AG04450 (cell line): ENCODE measurements at regions of chr18 and their contacts with region 1.

Region 1: DNA sequence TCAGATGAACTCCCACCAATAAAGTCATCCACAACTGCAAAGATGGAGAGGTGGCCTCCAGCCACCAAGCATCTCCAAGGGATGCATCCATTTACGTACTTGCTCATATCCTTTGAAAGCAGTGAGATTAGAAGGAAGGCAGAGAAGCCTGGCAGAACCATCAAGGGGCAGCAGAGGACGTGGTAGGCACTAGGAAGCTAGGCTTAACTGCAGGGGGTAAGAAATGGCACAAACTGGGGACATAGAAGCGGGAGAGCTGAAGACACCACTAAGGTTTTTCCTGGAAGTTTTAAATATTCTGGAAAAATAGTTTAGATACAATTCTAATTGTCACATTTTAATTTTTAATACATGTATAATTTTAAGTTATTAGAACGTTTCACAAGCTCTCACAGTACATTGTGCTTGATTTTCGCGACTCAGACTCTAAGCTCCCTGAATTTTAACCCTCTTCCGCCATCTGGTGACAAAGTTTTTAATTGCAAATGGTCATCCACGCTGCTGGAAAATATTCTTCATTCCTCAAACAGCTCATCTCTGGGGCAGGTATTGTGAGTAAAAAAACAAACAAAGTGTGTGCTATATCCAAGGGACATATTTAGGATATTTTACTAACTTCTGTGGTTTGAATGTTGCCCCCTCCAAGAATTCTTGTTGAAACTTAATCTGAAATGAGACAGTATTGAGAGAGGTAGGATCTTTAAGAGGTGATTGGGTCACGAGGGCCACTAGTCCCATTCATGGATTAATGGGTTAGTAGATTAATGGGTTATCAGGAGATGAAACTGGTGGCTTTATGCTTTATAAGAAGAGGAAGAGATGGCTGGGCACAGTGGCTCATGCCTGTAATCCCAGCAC is 1.6 kb upstream of the PSTPIP2 start:
- DNase-seq: no peak
- H3K4me3 ChIP-seq: no peak overlapping the region
- H3K27ac ChIP-seq: no peak overlapping the region
- H3K27me3 ChIP-seq: no peaks in the 10 kb centered on the region
- CTCF ChIP-seq: peak; percentile 61

Region 2: DNA sequence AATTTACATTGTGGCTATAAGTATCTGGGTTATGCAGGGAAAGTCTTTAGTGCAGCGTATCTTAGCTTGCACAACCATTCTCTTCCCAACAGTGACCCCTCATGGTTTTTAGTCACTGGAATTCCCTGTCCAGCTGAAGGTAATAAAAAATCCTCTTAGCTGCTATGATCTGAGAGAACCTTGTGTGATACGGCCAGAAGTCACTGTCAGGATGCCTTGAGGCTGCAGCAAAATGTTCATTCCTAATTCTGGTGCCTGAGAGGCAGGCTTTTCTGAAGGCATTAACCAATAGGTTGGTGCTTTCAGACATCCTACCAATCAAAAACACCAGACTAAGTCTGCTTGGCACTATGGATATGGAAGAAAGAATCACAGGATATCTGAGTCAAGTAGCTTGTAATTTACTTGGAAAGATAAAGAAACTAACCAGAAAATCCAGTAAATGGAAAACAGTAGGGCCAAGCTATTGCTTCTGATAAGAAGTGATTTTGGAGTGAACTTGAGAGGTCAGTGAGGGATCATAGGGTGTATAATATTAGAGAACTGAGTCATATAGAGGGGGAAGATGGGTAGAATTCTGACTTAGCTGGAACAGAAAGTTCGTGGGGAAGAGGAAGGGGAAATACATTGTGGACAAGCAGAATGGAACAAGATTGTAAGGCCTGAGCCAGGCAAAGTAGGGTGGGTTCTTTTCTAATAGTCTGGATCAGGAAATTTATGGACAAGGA is 547.4 kb before region 1 on chr18:
- CTCF ChIA-PET with region 1: no interaction called
- POLR2A ChIA-PET with region 1: no interaction called
- DNase-seq: no peak
- H3K4me3 ChIP-seq: no peak overlapping the region
- H3K27ac ChIP-seq: no peak overlapping the region
- H3K27me3 ChIP-seq: peaks cover 7% of the 10 kb centered on the region
- CTCF ChIP-seq: no peak

Region 3: DNA sequence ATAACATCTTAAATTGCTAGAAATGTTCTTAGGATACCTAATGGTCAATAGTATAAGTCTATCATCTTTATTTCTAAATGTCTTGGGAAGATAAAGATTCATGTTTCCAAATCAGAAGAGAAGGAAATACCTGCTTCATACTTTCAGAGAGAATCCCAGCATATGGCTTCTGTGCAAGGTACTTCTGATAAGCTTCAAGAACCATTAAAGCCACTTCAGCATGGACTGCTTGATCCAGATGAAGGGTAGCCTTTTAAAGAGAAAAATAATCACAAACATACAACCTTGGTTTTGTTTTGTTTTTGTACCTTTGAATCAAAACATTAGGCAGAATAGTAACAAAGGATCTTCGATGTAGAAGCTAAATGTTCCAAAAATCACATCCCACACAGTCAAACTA is 150.6 kb before region 1 on chr18:
- CTCF ChIA-PET with region 1: interaction called, 13 read pairs
- POLR2A ChIA-PET with region 1: no interaction called
- DNase-seq: no peak
- H3K4me3 ChIP-seq: no peak overlapping the region
- H3K27ac ChIP-seq: no peak overlapping the region
- H3K27me3 ChIP-seq: no peaks in the 10 kb centered on the region
- CTCF ChIP-seq: no peak

Region 4: GRCh38 chr18:45974088-45974536 is 99.6 kb before region 1 on chr18:
- CTCF ChIA-PET with region 1: interaction called, 14 read pairs
- POLR2A ChIA-PET with region 1: interaction called, 6 read pairs
- DNase-seq: peak; percentile 65
- H3K4me3 ChIP-seq: no peak overlapping the region
- H3K27ac ChIP-seq: no peak overlapping the region
- H3K27me3 ChIP-seq: no peaks in the 10 kb centered on the region
- CTCF ChIP-seq: peak; percentile 81

Region 5: DNA sequence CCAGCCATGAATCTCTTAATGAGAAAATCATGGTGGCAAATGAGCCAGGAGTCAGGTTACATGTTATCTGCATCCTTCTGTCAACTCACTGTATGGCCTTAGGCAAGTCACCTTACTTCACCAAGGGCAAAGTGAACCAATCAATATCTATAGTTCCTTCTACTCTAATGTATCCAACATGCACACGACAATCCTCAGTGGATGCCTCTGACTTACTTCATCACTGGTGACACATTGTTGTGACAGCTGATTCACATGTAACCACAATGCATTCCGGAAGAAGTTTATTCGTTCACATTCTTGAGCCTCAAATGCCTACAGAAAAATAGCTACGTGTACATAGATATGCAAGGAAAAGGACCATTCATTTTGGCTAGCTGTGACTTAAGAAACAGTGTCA is 80.3 kb before region 1 on chr18:
- CTCF ChIA-PET with region 1: interaction called, 12 read pairs
- POLR2A ChIA-PET with region 1: interaction called, 4 read pairs
- DNase-seq: peak; percentile 33
- H3K4me3 ChIP-seq: no peak overlapping the region
- H3K27ac ChIP-seq: no peak overlapping the region
- H3K27me3 ChIP-seq: no peaks in the 10 kb centered on the region
- CTCF ChIP-seq: no peak

Region 6: DNA sequence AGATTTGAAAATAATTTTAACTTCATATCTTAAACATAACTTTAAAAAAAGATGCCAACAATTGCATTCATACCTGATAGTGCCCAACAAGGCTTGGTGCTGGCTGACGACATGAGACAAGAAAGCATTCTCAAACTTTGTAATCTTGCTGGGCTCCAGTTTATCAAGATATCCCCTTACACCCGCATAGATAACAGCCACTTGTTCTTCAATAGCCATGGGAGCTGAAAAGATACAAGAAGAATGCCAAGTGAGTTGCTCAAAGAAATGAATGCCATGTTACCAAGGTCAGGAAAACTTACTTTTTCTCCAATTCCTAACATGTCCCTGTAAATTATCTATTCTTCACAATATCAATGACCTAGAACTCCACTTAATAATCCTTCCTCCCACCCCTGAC is 10.7 kb after region 1 on chr18:
- CTCF ChIA-PET with region 1: interaction called, 20 read pairs
- POLR2A ChIA-PET with region 1: no interaction called
- DNase-seq: no peak
- H3K4me3 ChIP-seq: no peak overlapping the region
- H3K27ac ChIP-seq: no peak overlapping the region
- H3K27me3 ChIP-seq: no peaks in the 10 kb centered on the region
- CTCF ChIP-seq: no peak

Region 7: DNA sequence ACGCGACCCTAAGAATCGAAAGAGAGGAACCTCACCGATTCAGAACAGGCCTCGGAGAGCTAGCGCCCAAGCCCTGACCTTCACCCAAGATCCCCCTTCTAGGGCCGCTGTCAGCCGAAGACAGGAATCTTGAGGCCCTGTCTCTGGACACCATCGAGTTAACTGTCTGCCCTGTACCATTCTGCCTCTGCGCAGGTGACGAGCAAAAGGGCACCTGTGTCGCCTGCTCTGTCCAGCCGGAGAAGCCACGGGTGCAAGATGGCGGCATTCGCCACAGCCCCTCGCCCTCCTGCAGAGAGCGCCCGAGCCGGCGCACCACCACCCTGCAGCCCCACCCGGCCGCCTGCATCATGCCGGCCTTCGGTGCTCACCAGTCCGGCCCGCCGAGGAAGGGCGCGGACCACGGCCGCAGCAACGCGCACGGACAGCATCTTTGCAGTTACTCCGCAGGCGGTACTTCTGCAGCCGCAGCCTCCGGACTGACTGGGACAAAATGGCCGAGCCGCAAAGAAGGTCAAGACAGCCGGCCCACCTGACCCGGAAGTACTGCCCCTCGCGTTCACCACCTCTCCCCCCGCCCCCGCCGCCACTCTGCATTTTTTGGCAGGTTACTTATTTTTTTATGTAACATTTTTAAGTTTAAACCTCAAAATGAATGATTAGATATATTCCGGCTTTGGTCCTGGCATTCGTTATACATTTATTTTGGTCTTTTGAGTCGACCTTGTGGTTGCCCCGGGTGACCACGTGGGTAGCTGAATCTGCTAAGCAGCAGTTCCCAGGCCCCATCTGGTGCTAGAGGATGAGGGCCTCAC is 24.3 kb after region 1 on chr18 and contains the start of gene ATP5F1A:
- CTCF ChIA-PET with region 1: interaction called, 20 read pairs
- POLR2A ChIA-PET with region 1: interaction called, 3 read pairs
- DNase-seq: peak; percentile 36
- H3K4me3 ChIP-seq: peak within 1 kb of the TSS; percentile 95
- H3K27ac ChIP-seq: peak within 1 kb of the TSS; percentile 57
- H3K27me3 ChIP-seq: no peaks in the 10 kb centered on the region
- CTCF ChIP-seq: no peak; the same call in 1 of the 2 replicates
- polyA plus RNA-seq, gene ATP5F1A: 805 and 937 TPM in 2 replicates